ENCODE measurements at regions of chr9 and their contacts with region 1.

Region 1: GRCh38 chr9:99231711-99232110 is 9.6 kb downstream of the SEC61B start:
- DNase-seq: peak; percentile 71
- ATAC-seq: peak; percentile 67
- H3K4me3 Mint-ChIP-seq: no peak overlapping the region
- H3K27ac Mint-ChIP-seq: no peak overlapping the region
- H3K4me1 Mint-ChIP-seq: peaks cover 15% of the 10 kb centered on the region
- H3K27me3 Mint-ChIP-seq: no peaks in the 10 kb centered on the region
- CTCF ChIP-seq: peak; percentile 79

Region 2: GRCh38 chr9:99162759-99163364 is 68.8 kb before region 1 on chr9:
- CTCF ChIA-PET with region 1: interaction called, 23 read pairs
- POLR2A ChIA-PET with region 1: no interaction called
- intact Hi-C with region 1: no loop called
- DNase-seq: peak; percentile 25
- ATAC-seq: peak; percentile 41
- H3K4me3 Mint-ChIP-seq: no peak overlapping the region
- H3K27ac Mint-ChIP-seq: no peak overlapping the region
- H3K4me1 Mint-ChIP-seq: peaks cover 42% of the 10 kb centered on the region
- H3K27me3 Mint-ChIP-seq: peaks cover 1% of the 10 kb centered on the region
- CTCF ChIP-seq: peak; percentile 88

Region 3: DNA sequence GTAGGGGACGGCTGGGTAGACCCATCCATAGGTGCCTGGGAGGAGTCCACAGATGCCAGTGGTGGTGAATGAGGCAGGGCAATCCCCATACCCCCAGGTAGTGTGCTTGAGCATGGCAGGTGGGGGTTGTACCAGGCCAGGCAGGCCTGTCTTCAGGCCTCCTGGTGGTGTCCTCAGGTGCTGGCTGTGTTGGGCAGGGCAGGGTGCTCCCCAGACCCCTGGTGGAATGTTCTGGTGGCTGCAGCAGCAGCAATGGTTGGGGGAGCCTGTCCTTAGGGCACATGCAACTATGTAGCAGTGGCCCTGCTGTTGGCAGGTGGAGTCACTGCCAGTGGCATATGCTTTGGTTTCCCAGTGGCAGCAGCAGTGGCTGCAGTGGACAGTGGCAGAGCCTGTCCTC is 20.0 kb before region 1 on chr9:
- CTCF ChIA-PET with region 1: interaction called, 12 read pairs
- POLR2A ChIA-PET with region 1: no interaction called
- intact Hi-C with region 1: no loop called
- DNase-seq: no peak
- ATAC-seq: peak; percentile 39
- H3K4me3 Mint-ChIP-seq: no peak overlapping the region
- H3K27ac Mint-ChIP-seq: no peak overlapping the region
- H3K4me1 Mint-ChIP-seq: peaks cover under 1% of the 10 kb centered on the region
- H3K27me3 Mint-ChIP-seq: peaks cover 3% of the 10 kb centered on the region
- CTCF ChIP-seq: no peak

Region 4: DNA sequence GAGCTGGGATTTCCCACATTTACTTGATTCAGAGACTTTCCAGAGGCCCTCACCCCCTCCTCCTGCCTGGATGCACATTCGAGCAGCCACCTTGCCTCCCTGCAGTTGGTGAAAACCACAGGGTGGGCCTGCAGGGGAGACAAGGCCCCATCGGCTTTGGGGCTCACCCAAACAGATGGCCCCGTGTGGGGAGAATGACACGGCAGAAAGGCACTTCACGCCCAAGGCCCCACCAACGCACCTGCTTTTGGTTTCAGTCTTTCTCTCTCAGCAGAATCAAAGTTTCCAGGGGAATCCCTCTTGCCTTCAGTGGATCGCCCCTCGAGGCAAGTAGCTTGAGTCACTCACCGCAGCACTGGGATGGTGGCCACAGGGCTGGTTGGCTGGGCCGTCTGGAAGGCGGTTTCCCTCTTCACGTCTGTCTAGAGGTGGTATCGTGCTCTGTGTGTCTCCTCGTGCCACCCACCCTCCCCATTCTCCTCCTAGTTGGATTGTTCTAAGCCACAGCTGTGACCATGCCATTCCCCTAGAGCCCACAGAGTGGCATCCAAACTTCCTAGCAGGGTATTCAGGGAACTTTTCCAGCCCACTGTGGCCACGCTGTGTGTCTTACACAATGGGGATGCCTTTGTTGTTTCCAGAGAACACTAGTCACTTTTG is 22.2 kb after region 1 on chr9:
- CTCF ChIA-PET with region 1: interaction called, 17 read pairs
- POLR2A ChIA-PET with region 1: interaction called, 6 read pairs
- intact Hi-C with region 1: no loop called
- DNase-seq: peak; percentile 98
- ATAC-seq: peak; percentile 82
- H3K4me3 Mint-ChIP-seq: peak overlapping the region; percentile 46
- H3K27ac Mint-ChIP-seq: peak overlapping the region; percentile 95
- H3K4me1 Mint-ChIP-seq: peaks cover 40% of the 10 kb centered on the region
- H3K27me3 Mint-ChIP-seq: peaks cover 9% of the 10 kb centered on the region
- CTCF ChIP-seq: no peak

Region 5: GRCh38 chr9:99259231-99259918 is 27.7 kb after region 1 on chr9:
- CTCF ChIA-PET with region 1: interaction called, 19 read pairs
- POLR2A ChIA-PET with region 1: interaction called, 4 read pairs
- intact Hi-C with region 1: no loop called
- DNase-seq: peak; percentile 68
- ATAC-seq: peak; percentile 90
- H3K4me3 Mint-ChIP-seq: peak overlapping the region; percentile 45
- H3K27ac Mint-ChIP-seq: peak overlapping the region; percentile 79
- H3K4me1 Mint-ChIP-seq: peaks cover 29% of the 10 kb centered on the region
- H3K27me3 Mint-ChIP-seq: peaks cover 10% of the 10 kb centered on the region
- CTCF ChIP-seq: no peak

Region 6: GRCh38 chr9:99266255-99267023 is 34.7 kb after region 1 on chr9:
- CTCF ChIA-PET with region 1: interaction called, 19 read pairs
- POLR2A ChIA-PET with region 1: no interaction called
- intact Hi-C with region 1: no loop called
- DNase-seq: peak; percentile 86
- ATAC-seq: peak; percentile 90
- H3K4me3 Mint-ChIP-seq: peak overlapping the region; percentile 6
- H3K27ac Mint-ChIP-seq: no peak overlapping the region
- H3K4me1 Mint-ChIP-seq: peaks cover 27% of the 10 kb centered on the region
- H3K27me3 Mint-ChIP-seq: peaks cover 3% of the 10 kb centered on the region
- CTCF ChIP-seq: peak; percentile 97

Region 7: DNA sequence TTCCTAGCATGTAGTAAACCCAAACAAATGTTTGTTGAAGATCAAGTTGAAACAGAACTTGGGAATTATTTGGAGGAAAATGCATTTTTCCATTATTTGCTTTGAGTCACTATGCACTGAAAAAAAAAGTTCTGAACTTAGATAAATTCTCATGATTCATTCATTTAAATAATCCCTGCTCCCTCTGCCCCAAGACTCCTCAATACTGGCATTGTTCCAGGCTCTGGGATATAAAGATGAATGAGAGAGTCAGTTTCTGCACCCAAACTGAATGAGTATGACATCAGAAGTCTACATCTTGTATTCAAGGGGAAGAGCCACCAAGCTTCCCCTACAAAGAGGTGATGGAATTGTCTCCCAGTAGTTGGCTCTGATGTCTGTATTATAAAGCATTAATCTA is 114.2 kb after region 1 on chr9:
- CTCF ChIA-PET with region 1: no interaction called
- POLR2A ChIA-PET with region 1: no interaction called
- intact Hi-C with region 1: no loop called
- DNase-seq: no peak
- ATAC-seq: no peak
- H3K4me3 Mint-ChIP-seq: no peak overlapping the region
- H3K27ac Mint-ChIP-seq: no peak overlapping the region
- H3K4me1 Mint-ChIP-seq: no peaks in the 10 kb centered on the region
- H3K27me3 Mint-ChIP-seq: peaks cover 8% of the 10 kb centered on the region
- CTCF ChIP-seq: no peak

Region 8: GRCh38 chr9:99474186-99474585 is 242.5 kb after region 1 on chr9:
- CTCF ChIA-PET with region 1: no interaction called
- POLR2A ChIA-PET with region 1: no interaction called
- intact Hi-C with region 1: no loop called
- DNase-seq: no peak
- ATAC-seq: no peak
- H3K4me3 Mint-ChIP-seq: no peak overlapping the region
- H3K27ac Mint-ChIP-seq: no peak overlapping the region
- H3K4me1 Mint-ChIP-seq: peaks cover 7% of the 10 kb centered on the region
- H3K27me3 Mint-ChIP-seq: peaks cover 17% of the 10 kb centered on the region
- CTCF ChIP-seq: no peak

Region 9: DNA sequence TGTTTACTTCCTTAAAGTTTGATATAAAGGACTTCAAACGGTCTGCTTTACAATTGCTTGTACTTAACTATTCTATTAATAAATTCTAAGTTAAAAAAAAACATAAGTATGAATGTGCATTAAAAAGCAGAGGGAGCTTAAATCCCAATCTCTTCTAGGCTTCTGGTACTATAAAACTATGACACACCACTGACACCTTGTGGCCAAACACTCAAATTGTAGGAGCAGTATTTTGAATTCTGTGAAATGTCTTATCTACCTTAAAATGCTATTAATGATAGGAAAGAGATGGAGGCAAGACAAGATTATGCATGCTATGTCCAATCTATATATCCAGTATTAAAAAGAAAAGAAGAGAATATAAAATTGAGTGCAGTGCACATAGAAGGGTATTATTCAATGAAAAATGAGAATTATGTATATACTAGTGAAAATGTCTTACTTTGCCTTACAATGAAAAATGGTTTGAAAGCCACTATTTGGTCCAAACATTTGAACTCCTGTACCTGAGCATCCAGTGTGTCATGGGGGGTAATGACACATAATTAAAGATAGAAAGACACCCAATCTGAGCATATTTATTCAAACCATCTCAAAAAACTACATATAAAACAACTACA is 779.5 kb after region 1 on chr9:
- CTCF ChIA-PET with region 1: interaction called, 19 read pairs
- POLR2A ChIA-PET with region 1: no interaction called
- intact Hi-C with region 1: no loop called
- DNase-seq: peak; percentile 46
- ATAC-seq: no peak
- H3K4me3 Mint-ChIP-seq: no peak overlapping the region
- H3K27ac Mint-ChIP-seq: no peak overlapping the region
- H3K4me1 Mint-ChIP-seq: no peaks in the 10 kb centered on the region
- H3K27me3 Mint-ChIP-seq: no peaks in the 10 kb centered on the region
- CTCF ChIP-seq: peak; percentile 92